ENCODE measurements at regions of chr4 and their contacts with region 1.

Region 1: DNA sequence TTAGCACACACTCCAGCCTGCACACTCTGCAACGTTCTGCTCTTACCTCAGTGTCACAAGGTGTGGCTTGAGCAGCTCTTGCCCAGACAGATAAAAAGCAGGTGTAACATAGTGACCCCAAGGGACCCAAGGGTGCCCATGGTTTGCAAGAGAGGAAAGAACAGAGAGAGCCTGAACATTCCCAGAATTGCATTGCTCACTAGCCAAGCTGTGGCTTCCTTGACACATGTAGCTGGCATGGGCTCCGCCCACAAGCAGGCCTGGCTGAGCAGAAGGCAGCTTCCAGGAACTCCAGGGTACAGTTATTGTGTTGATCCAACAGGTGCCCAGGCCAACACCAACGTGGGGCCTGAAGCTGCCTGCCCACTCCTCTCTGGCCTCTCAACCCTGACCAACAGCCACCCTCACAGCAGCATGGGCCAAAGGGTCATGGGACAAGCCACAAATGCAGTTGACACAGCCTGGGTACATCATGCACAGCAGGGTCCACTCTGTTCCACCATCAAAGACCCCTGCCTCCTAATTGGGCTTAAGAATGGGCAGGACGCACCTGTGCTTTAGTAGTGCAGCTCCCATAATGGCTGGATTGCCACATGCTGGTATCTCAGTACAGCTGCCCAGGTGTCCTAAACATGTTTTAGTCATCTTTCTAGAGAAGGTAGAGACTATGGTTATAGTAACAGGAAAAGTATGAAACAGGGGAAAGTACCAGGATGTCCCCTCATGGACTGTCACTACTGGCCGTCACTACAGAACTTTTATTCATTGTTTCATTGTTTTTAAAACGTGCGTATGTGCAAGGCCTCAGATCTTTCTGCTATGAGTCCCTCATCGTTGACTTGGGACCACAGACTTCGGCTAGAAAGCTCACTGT is 73.7 kb upstream of the ACSL1 start:
- DNase-seq: no peak
- H3K4me3 ChIP-seq: no peak overlapping the region
- H3K27ac ChIP-seq: no peak overlapping the region
- H3K4me1 ChIP-seq: no peaks in the 10 kb centered on the region
- H3K27me3 ChIP-seq: no peaks in the 10 kb centered on the region
- CTCF ChIP-seq: no peak
- EP300 ChIP-seq: no peak
- POLR2A ChIP-seq: no peak

Region 2: GRCh38 chr4:184775854-184776572 is 123.5 kb before region 1 on chr4:
- intact Hi-C with region 1: loop called in 1 of 4 experiments (anchors 1 kb)
- DNase-seq: no peak
- H3K4me3 ChIP-seq: no peak overlapping the region
- H3K27ac ChIP-seq: no peak overlapping the region
- H3K4me1 ChIP-seq: no peaks in the 10 kb centered on the region
- H3K27me3 ChIP-seq: no peaks in the 10 kb centered on the region
- CTCF ChIP-seq: no peak
- EP300 ChIP-seq: no peak
- POLR2A ChIP-seq: no peak

Region 3: DNA sequence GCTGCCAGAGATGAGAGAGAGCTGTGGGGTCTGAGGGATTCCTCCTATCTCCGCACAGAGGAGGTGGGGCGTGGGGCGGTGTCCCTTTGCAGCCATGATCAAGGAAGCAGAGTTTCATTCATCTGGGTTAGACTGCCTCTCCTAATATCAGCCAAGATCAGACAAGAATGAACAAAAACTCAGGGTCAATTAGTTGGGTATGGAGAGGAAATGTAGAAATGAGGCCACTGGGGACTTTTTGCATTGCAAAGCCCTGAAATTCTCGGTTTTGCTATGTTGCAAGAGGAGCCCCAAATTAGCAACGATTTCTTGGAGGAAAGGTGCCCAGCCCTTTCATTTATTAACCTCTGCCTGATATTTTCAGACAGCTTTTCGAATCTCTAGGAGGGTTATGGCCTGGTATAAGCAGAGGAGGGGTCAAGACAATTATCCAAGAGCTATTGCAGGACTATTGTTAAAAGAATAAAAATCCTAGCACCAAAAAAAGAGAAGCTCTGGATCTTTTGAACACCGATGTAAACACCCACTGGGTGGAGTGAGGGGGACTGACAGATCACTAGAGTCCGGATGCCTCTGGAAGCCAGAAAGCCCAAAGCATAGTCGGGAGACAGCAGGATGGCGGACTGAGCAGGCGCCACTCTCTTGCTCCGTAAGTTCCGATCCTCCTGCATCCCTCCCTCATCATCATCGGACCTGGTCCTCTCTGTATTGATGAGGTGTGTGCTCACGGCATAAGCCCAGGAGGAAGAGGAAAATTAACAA is 39.3 kb before region 1 on chr4:
- intact Hi-C with region 1: no loop called
- DNase-seq: no peak
- H3K4me3 ChIP-seq: no peak overlapping the region
- H3K27ac ChIP-seq: no peak overlapping the region
- H3K4me1 ChIP-seq: no peaks in the 10 kb centered on the region
- H3K27me3 ChIP-seq: no peaks in the 10 kb centered on the region
- CTCF ChIP-seq: no peak
- EP300 ChIP-seq: no peak
- POLR2A ChIP-seq: no peak